Posterior vena cava (tissue), 2 donors: ENCODE measurements at regions of chr11 and their contacts with region 1.

Region 1: DNA sequence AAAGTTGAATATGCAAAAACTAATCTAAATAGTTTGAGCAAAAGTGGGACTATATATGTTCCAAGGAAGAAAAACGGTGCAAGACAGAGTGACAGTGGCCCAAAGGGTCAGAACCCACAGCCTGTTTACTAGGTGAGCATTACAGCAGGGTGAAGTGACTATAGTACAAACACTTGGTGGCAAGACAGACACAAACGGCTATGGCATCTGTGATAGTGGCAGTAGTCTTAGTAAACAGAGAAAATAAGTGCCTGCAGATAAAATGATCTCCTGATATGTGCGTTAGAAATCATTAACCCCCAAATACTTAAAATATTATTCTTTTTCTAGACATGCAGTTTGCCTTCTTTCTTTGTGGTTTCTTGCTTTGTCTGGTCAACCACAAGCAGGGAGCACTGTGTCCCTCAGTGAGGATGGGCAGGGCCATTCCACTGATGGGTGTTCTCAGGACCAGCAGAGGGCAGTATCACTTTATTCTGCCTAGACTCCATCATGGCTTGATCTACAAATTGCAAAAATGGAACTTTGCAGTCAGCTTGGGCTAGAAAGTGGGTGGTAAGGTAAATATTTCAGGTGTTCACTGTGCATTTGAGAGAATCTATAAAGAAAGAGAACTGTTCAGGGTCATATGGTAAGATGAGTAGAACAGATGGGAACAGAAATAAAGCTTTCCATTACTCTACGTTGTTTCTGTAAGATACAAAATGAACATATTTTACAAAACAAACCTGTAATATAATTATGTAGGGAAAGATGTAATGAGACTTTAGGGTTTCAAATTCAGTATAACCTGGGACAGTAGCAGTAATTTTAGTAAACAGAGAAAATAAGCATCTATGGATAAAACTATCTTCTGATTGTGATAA is 198.2 kb downstream of the SWAP70 start:
- DNase-seq: no peak

Region 2: DNA sequence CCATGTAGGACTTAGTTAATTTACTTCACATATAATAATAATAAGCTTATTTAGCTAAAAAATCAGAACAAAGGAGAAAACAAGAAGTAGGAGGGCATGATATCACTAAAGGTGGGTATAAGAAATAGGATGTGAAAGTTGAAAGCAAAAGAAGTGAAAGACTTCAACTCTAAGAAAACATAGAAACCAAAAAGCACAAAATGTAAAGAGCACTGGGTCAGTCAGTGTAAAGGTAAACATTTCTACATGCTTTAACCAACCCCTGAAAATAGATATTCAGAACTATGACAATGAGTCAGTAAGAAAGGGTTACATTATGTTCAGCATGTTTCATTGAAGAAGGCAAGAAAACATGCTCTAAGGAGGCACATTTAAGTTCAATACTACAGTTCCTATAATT is 100.6 kb after region 1 on chr11:
- intact Hi-C with region 1: loop called in 1 of 2 experiments (anchors 10 kb)
- DNase-seq: no peak

Region 3: DNA sequence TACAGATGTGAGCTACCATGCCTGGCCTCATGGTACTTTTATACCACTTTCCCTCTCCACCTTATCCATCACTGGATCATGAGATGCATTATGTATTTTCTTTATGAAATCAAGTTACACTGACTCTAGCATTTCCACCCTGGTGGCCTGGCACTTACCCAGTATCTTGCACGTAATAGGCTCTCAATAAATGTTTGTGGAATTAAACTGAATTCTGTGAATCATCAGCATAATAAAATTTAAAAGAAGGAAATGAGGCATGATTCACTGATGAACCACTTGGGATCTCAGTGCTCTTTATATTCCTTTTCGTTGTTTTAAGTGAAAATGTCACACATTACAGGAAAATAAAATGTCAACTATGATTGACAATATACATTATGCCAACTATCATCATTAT is 467.8 kb after region 1 on chr11:
- intact Hi-C with region 1: loop called in 1 of 2 experiments (anchors 10 kb)
- DNase-seq: no peak

Region 4: DNA sequence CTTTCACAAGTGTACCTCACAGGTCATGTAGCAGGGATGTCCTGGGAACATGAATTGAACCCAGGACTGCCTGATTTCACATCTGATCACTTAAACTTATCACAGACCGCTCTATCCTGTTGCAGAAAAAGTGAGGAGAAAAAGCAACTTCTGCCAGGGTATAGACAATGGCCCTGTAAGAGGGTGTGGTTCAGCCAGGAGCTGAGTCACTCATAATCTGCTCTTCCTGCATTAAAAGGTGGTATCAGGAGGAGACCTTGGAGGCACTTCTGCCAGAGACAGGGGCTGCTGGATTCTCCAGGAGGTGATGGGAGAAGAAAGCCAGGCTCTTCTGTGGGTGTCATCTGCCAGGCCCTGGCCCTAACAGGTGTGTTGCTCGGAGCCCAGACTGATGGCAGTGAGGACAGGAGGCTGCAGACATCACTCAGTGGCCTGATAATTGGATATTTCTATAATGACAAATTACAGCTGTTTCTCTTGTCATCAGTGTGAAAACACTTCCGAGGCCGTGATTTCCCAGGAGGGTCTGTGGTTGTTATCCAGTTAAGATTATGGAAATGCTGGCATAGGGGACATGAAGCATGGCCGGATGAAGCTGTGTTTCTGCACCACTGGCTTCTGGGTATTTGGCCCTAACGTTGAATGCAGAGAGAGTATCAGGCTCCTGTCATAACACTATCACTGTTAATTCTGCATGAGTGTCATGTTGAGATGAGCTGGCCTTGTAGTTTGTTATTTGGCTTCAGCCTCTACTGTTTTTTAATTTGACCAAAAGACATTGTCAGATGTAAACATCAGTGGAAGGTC is 1120.8 kb after region 1 on chr11:
- intact Hi-C with region 1: no loop called
- DNase-seq: no peak